Caco-2 (cell line): ENCODE measurements at regions of chr9 and their contacts with region 1.

Region 1: DNA sequence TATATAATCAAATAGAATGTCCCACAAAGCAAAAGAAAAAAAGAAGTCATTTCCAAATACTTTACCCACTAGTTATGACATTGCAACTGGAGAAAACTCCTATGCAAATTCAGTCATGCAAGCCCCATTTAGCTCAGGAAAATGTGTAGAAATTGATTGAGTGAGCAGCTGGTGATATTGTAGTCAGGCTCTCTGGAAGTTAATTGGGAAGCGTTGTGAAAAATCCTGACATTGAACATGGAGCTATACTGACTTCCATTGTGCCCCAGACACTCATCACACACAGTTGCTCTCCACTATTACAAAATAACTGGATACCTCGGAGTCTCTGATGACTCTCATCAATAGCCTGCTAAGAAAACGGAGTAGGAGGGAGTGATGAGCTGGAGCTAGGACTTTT is 49.0 kb downstream of the TUSC1 start:
- DNase-seq: no peak
- H3K4me3 ChIP-seq: no peak overlapping the region
- H3K4me3 Mint-ChIP-seq: no peak overlapping the region
- H3K27ac Mint-ChIP-seq: no peak overlapping the region
- H3K4me1 ChIP-seq: no peaks in the 10 kb centered on the region
- H3K4me1 Mint-ChIP-seq: no peaks in the 10 kb centered on the region
- H3K27me3 ChIP-seq: no peaks in the 10 kb centered on the region
- H3K27me3 Mint-ChIP-seq: no peaks in the 10 kb centered on the region
- CTCF ChIP-seq: no peak

Region 2: GRCh38 chr9:25418974-25419373 is 210.3 kb before region 1 on chr9:
- CTCF ChIA-PET with region 1: no interaction called
- POLR2A ChIA-PET with region 1: no interaction called
- intact Hi-C with region 1: no loop called
- DNase-seq: no peak
- H3K4me3 ChIP-seq: no peak overlapping the region
- H3K4me3 Mint-ChIP-seq: no peak overlapping the region
- H3K27ac Mint-ChIP-seq: no peak overlapping the region
- H3K4me1 ChIP-seq: no peaks in the 10 kb centered on the region
- H3K4me1 Mint-ChIP-seq: no peaks in the 10 kb centered on the region
- H3K27me3 ChIP-seq: no peaks in the 10 kb centered on the region
- H3K27me3 Mint-ChIP-seq: no peaks in the 10 kb centered on the region
- CTCF ChIP-seq: no peak

Region 3: GRCh38 chr9:25562111-25562510 is 67.1 kb before region 1 on chr9:
- CTCF ChIA-PET with region 1: no interaction called
- POLR2A ChIA-PET with region 1: no interaction called
- intact Hi-C with region 1: no loop called
- DNase-seq: peak in 1 of 2 experiments; percentile 0
- H3K4me3 ChIP-seq: no peak overlapping the region
- H3K4me3 Mint-ChIP-seq: no peak overlapping the region
- H3K27ac Mint-ChIP-seq: no peak overlapping the region
- H3K4me1 ChIP-seq: no peaks in the 10 kb centered on the region
- H3K4me1 Mint-ChIP-seq: no peaks in the 10 kb centered on the region
- H3K27me3 ChIP-seq: no peaks in the 10 kb centered on the region
- H3K27me3 Mint-ChIP-seq: no peaks in the 10 kb centered on the region
- CTCF ChIP-seq: no peak

Region 4: GRCh38 chr9:25584611-25585010 is 44.6 kb before region 1 on chr9:
- CTCF ChIA-PET with region 1: no interaction called
- POLR2A ChIA-PET with region 1: no interaction called
- intact Hi-C with region 1: no loop called
- DNase-seq: no peak
- H3K4me3 ChIP-seq: no peak overlapping the region
- H3K4me3 Mint-ChIP-seq: no peak overlapping the region
- H3K27ac Mint-ChIP-seq: no peak overlapping the region
- H3K4me1 ChIP-seq: no peaks in the 10 kb centered on the region
- H3K4me1 Mint-ChIP-seq: no peaks in the 10 kb centered on the region
- H3K27me3 ChIP-seq: no peaks in the 10 kb centered on the region
- H3K27me3 Mint-ChIP-seq: no peaks in the 10 kb centered on the region
- CTCF ChIP-seq: no peak

Region 5: DNA sequence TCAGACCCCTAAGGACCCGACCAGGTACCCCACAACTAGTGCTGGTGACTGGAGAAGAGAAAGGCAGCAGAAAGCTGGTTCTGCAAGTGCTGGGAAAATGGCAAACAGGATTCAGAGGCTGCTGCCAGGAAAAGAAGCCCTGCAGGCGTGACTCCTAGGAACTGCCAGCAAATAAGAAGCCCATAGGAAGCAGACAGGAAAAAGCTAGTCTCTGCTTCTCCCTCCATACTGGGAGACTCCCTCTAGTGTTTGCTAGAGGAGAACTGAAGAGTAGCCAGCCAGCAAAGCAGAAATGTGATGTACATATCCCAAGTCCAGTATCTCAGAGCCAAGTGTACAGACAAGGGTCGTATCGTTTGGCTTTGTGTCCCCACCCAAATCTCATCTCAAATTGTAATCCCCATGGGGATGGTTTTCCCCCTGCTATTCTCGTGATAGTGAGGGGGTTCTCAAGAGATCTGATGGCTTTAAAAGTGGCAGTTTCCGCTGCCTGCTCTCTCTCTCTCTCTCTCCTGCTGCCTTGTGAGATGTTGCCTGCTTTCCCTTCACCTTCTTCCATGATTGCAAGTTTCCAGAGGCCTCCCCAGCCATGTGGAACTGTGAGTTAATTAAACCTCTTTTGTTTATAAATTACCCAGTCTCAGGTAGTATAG is 87.1 kb after region 1 on chr9:
- CTCF ChIA-PET with region 1: no interaction called
- POLR2A ChIA-PET with region 1: no interaction called
- intact Hi-C with region 1: loop called (anchors 1 kb)
- DNase-seq: peak; percentile 25 to 35
- H3K4me3 ChIP-seq: no peak overlapping the region
- H3K4me3 Mint-ChIP-seq: no peak overlapping the region
- H3K27ac Mint-ChIP-seq: no peak overlapping the region
- H3K4me1 ChIP-seq: no peaks in the 10 kb centered on the region
- H3K4me1 Mint-ChIP-seq: no peaks in the 10 kb centered on the region
- H3K27me3 ChIP-seq: no peaks in the 10 kb centered on the region
- H3K27me3 Mint-ChIP-seq: no peaks in the 10 kb centered on the region
- CTCF ChIP-seq: peak in 1 of 2 experiments; percentile 39

Region 6: DNA sequence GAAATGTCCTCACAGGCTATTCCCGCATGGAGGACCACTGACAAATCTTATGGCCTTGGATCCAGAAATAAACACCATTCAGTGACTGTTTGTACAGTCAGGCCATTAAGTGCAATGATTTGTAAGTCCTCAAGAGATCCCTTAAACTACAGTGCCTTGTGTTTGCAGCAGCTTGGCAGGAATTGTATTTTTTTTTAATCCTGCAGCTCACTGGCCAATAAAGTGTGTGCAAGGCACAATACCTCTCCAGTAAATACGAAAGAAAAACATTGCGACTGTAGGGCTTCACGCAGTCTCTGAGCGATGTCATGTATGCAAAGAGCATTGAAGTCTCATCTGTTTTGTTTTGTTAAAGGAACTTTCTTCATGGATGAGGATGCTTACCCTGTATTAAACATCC is 123.2 kb after region 1 on chr9:
- CTCF ChIA-PET with region 1: no interaction called
- POLR2A ChIA-PET with region 1: no interaction called
- intact Hi-C with region 1: no loop called
- DNase-seq: no peak
- H3K4me3 ChIP-seq: no peak overlapping the region
- H3K4me3 Mint-ChIP-seq: no peak overlapping the region
- H3K27ac Mint-ChIP-seq: no peak overlapping the region
- H3K4me1 ChIP-seq: no peaks in the 10 kb centered on the region
- H3K4me1 Mint-ChIP-seq: no peaks in the 10 kb centered on the region
- H3K27me3 ChIP-seq: no peaks in the 10 kb centered on the region
- H3K27me3 Mint-ChIP-seq: no peaks in the 10 kb centered on the region
- CTCF ChIP-seq: no peak